GM23248 (cell line): ENCODE measurements at regions of chr4 and their contacts with region 1.

Region 1: DNA sequence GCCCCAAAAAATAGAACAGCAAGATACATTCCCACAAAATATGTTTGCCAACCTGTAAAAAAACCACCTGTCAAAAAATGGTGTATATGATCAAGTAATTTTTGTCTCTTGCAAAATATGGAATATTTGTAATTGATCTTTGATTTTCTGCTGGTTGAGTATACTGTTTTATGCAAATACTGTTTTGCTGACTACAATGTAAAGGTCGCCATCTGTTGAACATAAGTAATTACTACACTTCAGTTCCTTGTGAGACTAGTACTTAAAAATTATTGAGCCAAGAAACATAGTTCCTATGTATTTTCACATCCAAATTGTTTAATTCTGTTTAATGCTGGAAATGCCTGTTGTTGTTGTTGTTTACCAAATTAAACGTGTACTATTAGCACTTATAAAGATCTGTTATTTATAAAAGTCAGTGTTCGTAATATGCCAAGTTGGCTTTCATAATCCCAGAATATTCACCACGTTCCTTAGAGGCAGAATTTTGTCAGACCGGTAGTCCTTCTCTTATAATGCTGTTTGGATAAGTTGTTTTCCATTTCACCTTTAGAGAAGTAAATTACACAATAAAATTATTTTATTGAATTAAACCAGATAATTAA is 144.2 kb downstream of the PDLIM5 start:
- DNase-seq: peak; percentile 74
- H3K4me3 ChIP-seq: no peak overlapping the region
- H3K27ac ChIP-seq: no peak overlapping the region
- H3K4me1 ChIP-seq: peaks cover under 1% of the 10 kb centered on the region; the same call in 1 of the 2 replicates
- H3K27me3 ChIP-seq: no peaks in the 10 kb centered on the region

Region 2: DNA sequence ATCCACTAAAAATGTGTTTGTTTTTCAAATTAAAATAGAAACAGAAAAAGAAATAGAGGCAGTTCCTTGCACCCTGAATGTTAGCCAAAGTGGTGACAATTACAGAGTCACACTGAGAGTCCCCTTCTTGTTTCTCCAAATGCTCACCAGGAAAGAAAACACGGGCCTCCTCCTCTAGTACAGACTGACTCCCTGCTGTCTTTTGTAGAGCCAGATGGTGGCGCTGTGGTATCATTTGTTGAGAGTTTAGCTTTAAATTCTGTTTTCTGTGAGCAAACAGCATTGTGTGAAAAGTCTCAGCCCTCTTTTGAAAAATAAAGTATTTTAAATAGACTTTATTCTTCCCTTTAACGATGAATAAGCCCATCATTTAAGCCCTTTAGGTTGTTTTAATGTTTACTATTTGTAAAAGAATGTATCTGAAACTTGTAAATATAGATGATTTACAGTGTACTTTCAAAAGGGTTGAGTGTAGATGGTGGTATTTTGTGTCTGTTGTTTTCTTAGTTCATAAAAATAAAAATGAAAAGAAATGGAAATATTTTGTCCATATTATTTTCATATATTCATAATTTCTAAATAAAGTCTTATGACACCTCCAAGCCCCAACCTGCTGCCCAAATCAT is 804.3 kb before region 1 on chr4:
- in situ Hi-C with region 1: loop called (anchors 25 kb)
- DNase-seq: peak; percentile 68
- H3K4me3 ChIP-seq: no peak overlapping the region
- H3K27ac ChIP-seq: no peak overlapping the region
- H3K4me1 ChIP-seq: no peaks in the 10 kb centered on the region
- H3K27me3 ChIP-seq: peaks cover 12% of the 10 kb centered on the region

Region 3: GRCh38 chr4:94406668-94407437 is 189.1 kb before region 1 on chr4:
- in situ Hi-C with region 1: loop called (anchors 5 kb)
- DNase-seq: peak; percentile 84
- H3K4me3 ChIP-seq: no peak overlapping the region
- H3K27ac ChIP-seq: no peak overlapping the region
- H3K4me1 ChIP-seq: peaks cover 36% of the 10 kb centered on the region
- H3K27me3 ChIP-seq: no peaks in the 10 kb centered on the region